ENCODE measurements at regions of chr11 and their contacts with region 1.

Region 1: DNA sequence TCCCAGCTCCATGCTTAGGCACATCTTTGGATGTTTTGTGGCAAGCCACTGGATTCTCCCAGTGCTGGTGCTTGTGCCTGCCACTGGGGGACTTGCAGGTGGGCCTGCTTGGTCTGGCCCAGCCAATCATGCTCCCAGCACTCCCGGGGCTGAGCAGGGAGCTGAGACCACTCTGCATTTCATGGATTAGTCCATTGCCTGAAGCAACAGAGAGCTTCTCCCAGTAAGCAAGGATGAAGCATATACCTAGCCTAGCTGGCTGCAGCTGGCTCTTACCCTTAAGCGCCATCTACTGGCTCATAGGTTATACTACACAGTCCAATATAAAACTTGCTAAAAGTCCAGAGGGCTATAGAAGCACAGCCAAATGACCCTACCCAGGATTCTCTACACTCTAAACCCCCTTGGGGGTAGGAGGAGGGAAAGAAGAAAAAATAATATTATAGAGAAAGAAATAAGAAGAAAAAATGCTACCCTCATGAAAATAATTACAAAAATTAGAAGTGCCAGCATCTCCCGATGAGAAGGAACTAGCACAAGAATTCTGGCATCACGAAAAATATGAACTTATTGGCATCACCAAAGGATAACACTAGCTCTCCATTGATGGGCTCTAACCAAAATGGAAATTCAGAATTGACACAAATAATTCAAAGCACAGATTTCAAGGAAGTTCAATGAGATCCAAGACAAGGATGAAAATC is 275.3 kb downstream of the C11orf87 start:
- DNase-seq: peak in 3 of 7 donors; percentile 13 to 32 (median 26)
- H3K4me3 ChIP-seq: no peak overlapping the region
- H3K27ac ChIP-seq: no peak overlapping the region
- H3K4me1 ChIP-seq: no peaks in the 10 kb centered on the region
- H3K27me3 ChIP-seq: no peaks in the 10 kb centered on the region
- CTCF ChIP-seq: peak; percentile 46 to 65 (median 56)
- POLR2A ChIP-seq: no peak

Region 2: DNA sequence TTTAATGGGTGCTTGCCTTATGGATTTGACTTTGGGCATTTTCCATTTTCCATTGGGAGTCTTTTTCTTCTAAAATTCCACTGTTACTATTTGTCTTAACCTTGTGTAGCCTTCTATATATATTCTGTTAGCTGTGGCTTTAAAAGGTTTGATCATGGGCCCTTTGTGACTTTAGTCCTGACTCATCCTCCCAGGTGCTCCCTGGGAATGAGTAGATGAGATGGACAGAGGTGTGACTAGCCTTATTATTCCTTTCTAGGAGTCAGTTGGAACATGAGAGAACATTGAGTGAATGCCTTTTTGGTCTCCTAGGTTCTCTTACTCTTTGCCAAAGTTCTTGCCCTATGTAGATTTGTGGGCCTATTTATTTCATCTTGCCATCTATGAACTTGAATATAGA is 993.4 kb before region 1 on chr11:
- intact Hi-C with region 1: loop called in 1 of 2 experiments (anchors 10 kb)
- DNase-seq: no peak
- H3K4me3 ChIP-seq: no peak overlapping the region
- H3K27ac ChIP-seq: no peak overlapping the region
- H3K4me1 ChIP-seq: no peaks in the 10 kb centered on the region
- H3K27me3 ChIP-seq: no peaks in the 10 kb centered on the region
- CTCF ChIP-seq: no peak
- POLR2A ChIP-seq: no peak

Region 3: DNA sequence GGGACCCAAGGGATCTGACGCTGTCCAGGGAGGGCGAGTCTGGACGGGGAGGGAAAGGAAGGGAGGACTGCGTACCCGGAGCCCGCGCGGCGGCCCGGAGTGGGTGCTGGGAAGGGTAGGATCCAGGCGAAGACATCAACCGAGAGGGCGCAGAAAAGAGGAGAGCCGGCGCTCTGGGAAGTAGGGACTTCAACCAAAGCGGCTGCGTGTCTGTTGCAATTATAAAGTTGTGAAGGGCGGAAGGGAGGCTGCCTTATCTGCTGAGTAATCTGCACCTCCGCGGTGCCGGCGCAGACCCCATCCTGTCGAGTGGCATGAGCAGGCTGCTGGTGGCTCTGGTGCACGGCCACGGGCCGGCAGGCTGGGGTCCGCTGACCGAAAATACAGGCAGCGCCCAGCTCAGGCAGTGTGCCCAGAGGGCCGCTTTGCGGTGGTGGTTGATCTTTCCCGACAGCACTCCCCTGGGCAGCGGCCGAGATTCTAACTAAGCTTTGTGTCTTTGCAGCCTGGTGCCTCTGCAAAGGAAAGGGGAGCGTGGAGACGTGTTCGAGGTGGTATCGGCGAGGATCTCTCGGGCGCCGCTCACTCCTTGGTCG is 274.3 kb before region 1 on chr11:
- intact Hi-C with region 1: no loop called
- DNase-seq: peak in 2 of 7 donors; percentile 1 to 13
- H3K4me3 ChIP-seq: peak overlapping the region in 1 of 4 donors; percentile 38
- H3K27ac ChIP-seq: no peak overlapping the region
- H3K4me1 ChIP-seq: peaks cover 6 to 11% of the 10 kb centered on the region in 2 donors
- H3K27me3 ChIP-seq: peaks cover 26% of the 10 kb centered on the region
- CTCF ChIP-seq: no peak
- POLR2A ChIP-seq: no peak

Region 4: GRCh38 chr11:109512680-109513079 is 184.6 kb before region 1 on chr11:
- intact Hi-C with region 1: no loop called
- DNase-seq: no peak
- H3K4me3 ChIP-seq: no peak overlapping the region
- H3K27ac ChIP-seq: no peak overlapping the region
- H3K4me1 ChIP-seq: no peaks in the 10 kb centered on the region
- H3K27me3 ChIP-seq: no peaks in the 10 kb centered on the region
- CTCF ChIP-seq: no peak
- POLR2A ChIP-seq: no peak

Region 5: DNA sequence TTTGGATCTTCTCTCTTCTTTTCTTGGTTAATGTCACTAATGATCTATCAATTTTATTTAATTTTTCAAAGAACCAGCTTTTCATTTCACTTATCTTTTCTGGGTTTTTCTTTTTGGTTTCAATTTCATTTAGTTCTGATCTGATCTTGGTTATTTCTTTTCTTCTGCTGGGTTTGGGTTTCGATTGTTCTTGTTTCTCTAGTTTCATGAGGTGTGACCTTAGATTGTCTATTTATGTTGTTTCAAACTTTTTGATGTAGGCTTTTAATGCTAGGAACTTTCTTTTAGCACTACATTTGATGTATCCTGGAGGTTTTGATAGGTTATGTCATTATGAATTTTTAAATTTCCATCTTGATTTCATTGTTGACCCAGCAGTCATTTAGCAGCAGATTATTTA is 133.1 kb before region 1 on chr11:
- intact Hi-C with region 1: no loop called
- DNase-seq: no peak
- H3K4me3 ChIP-seq: no peak overlapping the region
- H3K27ac ChIP-seq: no peak overlapping the region
- H3K4me1 ChIP-seq: no peaks in the 10 kb centered on the region
- H3K27me3 ChIP-seq: no peaks in the 10 kb centered on the region
- CTCF ChIP-seq: no peak
- POLR2A ChIP-seq: no peak

Measured in adrenal gland (tissue), 19 donors.